WTC11 (cell line): ENCODE measurements at regions of chr4 and their contacts with region 1.

Region 1: GRCh38 chr4:4327652-4328121 is 37.6 kb downstream of the ZBTB49 start:
- DNase-seq: peak; percentile 85
- ATAC-seq: peak; percentile 98
- H3K4me3 Mint-ChIP-seq: peak overlapping the region; percentile 9; the same call in 1 of the 2 replicates
- H3K27ac Mint-ChIP-seq: peak overlapping the region; percentile 81
- H3K4me1 Mint-ChIP-seq: peaks cover 12% of the 10 kb centered on the region
- H3K27me3 Mint-ChIP-seq: no peaks in the 10 kb centered on the region; the same call in 1 of the 2 replicates
- CTCF ChIP-seq: no peak

Region 2: DNA sequence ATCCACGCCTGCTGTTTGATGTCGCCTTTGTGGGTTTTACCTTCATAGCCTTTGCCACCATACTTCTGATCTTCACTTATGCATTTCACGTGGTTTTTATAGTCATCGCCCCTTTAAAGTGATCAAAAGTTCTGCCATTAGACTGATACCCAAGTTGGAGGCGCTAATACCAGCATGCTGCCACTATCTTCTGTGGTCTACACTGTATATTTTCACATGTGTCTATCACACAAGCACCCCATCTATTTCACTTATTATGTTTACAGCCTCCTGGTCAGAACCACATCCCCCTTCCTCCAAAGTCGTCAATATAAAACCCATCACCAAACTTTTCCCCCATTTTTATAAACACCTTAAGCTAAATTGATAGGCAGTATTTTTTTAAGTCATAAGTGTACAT is 45.9 kb before region 1 on chr4:
- CTCF ChIA-PET with region 1: no interaction called
- POLR2A ChIA-PET with region 1: no interaction called
- DNase-seq: no peak
- ATAC-seq: no peak
- H3K4me3 Mint-ChIP-seq: no peak overlapping the region
- H3K27ac Mint-ChIP-seq: no peak overlapping the region
- H3K4me1 Mint-ChIP-seq: no peaks in the 10 kb centered on the region
- H3K27me3 Mint-ChIP-seq: no peaks in the 10 kb centered on the region
- CTCF ChIP-seq: no peak

Region 3: GRCh38 chr4:4317496-4318232 is 10.0 kb before region 1 on chr4:
- CTCF ChIA-PET with region 1: interaction called, 14 read pairs
- POLR2A ChIA-PET with region 1: no interaction called
- DNase-seq: no peak
- ATAC-seq: no peak
- H3K4me3 Mint-ChIP-seq: no peak overlapping the region
- H3K27ac Mint-ChIP-seq: no peak overlapping the region
- H3K4me1 Mint-ChIP-seq: peaks cover 12% of the 10 kb centered on the region
- H3K27me3 Mint-ChIP-seq: no peaks in the 10 kb centered on the region
- CTCF ChIP-seq: no peak

Region 4: DNA sequence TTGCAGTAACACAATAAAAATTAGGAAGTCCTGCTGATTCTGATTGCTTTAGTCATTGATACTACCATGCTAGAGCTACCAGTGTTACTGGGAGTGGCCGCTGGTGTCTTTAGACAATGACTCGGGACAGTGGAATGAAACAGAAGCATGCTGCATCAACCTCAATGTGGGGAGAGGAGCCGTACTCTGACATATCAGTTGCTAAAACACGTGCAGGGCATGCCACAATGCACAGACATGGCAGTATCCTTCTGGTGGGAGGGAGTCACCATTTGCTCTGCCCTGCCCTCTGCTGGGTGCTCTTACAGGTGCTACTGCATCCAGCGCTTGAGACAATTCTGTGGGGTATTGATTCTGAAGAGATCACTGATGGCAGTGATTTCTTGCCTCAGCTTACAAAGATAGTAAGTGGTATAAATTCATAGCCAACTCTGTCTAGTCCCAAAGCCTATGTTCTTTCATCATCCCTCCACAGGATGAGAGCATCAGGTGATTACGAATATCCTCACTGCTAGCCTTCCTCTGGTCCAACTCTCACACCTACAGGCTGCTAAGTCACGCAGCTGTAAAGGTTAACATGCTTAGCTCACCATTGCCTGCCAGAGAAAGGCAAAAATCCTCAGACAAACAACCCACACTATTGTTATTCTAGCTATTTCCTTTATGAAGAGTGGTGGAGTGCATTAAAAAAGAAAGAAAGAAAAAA is 103.0 kb after region 1 on chr4:
- CTCF ChIA-PET with region 1: interaction called, 11 read pairs
- POLR2A ChIA-PET with region 1: no interaction called
- DNase-seq: peak; percentile 69
- ATAC-seq: peak; percentile 84
- H3K4me3 Mint-ChIP-seq: no peak overlapping the region
- H3K27ac Mint-ChIP-seq: no peak overlapping the region
- H3K4me1 Mint-ChIP-seq: peaks cover 43% of the 10 kb centered on the region
- H3K27me3 Mint-ChIP-seq: peaks cover 8% of the 10 kb centered on the region
- CTCF ChIP-seq: peak; percentile 63